CD14-positive monocyte (primary cell): ENCODE measurements at regions of chr6 and their contacts with region 1.

Region 1: DNA sequence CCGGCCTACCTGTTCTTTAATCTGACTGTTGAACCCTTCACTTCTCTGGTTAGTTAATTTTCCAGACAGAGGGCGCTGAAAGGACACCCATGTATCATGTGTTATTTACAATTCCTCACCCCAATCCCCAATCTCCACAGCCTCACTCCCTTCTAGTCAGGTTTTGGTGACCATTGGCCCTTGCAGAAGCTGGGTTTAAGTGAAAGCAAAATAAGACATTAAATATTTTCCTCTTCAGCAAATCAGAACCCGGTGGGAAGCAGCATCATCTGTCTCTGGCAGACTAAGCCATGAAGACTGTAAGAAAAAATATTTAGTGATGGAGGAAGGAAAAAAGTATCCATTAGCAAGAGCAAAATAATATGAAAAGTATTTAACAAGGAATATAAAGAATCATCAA is 9.4 kb upstream of the HLA-DQA1 start:
- DNase-seq: peak; percentile 65 to 81 (median 77)
- H3K4me3 ChIP-seq: no peak overlapping the region
- H3K4me3 Mint-ChIP-seq: peak overlapping the region in 1 of 2 donors; percentile 30
- H3K27ac ChIP-seq: peak overlapping the region; percentile 63 to 68
- H3K27ac Mint-ChIP-seq: peak overlapping the region; percentile 56 to 99 (median 93)
- H3K4me1 ChIP-seq: peaks cover 26 to 39% of the 10 kb centered on the region in 2 donors
- H3K4me1 Mint-ChIP-seq: peaks cover 40% of the 10 kb centered on the region
- H3K27me3 ChIP-seq: no peaks in the 10 kb centered on the region
- H3K27me3 Mint-ChIP-seq: peaks cover 0 to 2% (median 2%) of the 10 kb centered on the region in 3 donors
- CTCF ChIP-seq: no peak

Region 2: GRCh38 chr6:32589598-32590449 is 38.0 kb before region 1 on chr6 and contains the start of gene HLA-DRB1:
- intact Hi-C with region 1: no loop called
- DNase-seq: peak; percentile 73 to 86 (median 74)
- H3K4me3 ChIP-seq: peak within 1 kb of the TSS; percentile 47 to 83 (median 74)
- H3K4me3 Mint-ChIP-seq: peak within 1 kb of the TSS; percentile 90 to 96
- H3K27ac ChIP-seq: peak within 1 kb of the TSS; percentile 63 to 80
- H3K27ac Mint-ChIP-seq: peak within 1 kb of the TSS; percentile 91 to 99 (median 97)
- H3K4me1 ChIP-seq: peaks cover 0 to 10% of the 10 kb centered on the region in 2 donors
- H3K4me1 Mint-ChIP-seq: peaks cover 58% of the 10 kb centered on the region
- H3K27me3 ChIP-seq: no peaks in the 10 kb centered on the region
- H3K27me3 Mint-ChIP-seq: peaks cover 0 to 2% (median 0%) of the 10 kb centered on the region in 3 donors
- CTCF ChIP-seq: no peak
- polyA plus RNA-seq, gene HLA-DRB1: 928 to 2,792 (median 2,645) TPM

Region 3: GRCh38 chr6:32666420-32667300 is 38.8 kb after region 1 on chr6 and contains the start of gene HLA-DQB1:
- intact Hi-C with region 1: loop called in 1 of 2 experiments (anchors 5 kb)
- DNase-seq: peak; percentile 61 to 85 (median 79)
- H3K4me3 ChIP-seq: peak within 1 kb of the TSS; percentile 59 to 94 (median 78)
- H3K4me3 Mint-ChIP-seq: peak within 1 kb of the TSS; percentile 97 to 100
- H3K27ac ChIP-seq: peak within 1 kb of the TSS; percentile 67 to 69
- H3K27ac Mint-ChIP-seq: peak within 1 kb of the TSS; percentile 86 to 99 (median 98)
- H3K4me1 ChIP-seq: peaks cover 25 to 37% of the 10 kb centered on the region in 2 donors
- H3K4me1 Mint-ChIP-seq: peaks cover 54% of the 10 kb centered on the region
- H3K27me3 ChIP-seq: no peaks in the 10 kb centered on the region
- H3K27me3 Mint-ChIP-seq: peaks cover 1 to 14% (median 3%) of the 10 kb centered on the region in 3 donors
- CTCF ChIP-seq: no peak
- polyA plus RNA-seq, gene HLA-DQB1: 66.7 to 638 (median 246) TPM